ENCODE measurements at regions of chr9 and their contacts with region 1.

Region 1: DNA sequence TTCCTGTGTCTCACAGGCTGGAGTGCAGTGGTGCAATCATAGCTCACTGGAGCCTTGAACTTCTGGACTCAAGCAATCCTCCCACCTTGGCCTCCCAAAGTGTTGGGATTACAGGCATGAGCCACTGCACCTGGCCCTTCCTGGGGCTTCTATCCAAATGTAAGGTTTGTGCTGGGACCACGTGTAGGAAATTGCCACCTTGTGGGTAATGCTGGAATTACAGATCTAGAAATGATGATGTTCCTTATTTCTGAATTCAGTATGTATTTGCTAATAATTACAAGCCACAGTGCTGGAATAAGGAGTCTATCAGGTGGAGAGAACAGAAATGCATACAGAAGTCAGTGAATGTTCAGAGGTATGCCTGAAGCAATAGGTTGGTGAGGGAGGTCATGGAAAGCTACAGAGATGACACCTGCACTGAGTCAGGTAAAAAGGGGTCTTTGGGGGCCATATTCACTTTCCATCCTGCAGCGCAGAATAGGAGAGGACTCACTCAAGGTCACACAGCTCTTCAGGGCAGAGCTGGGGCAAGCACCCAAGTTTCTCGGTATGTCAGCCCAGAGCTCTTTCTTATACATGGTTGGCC is 8.8 kb upstream of the IGFBPL1 start:
- DNase-seq: no peak
- H3K4me3 Mint-ChIP-seq: no peak overlapping the region
- H3K27ac Mint-ChIP-seq: no peak overlapping the region
- H3K4me1 Mint-ChIP-seq: peaks cover 13% of the 10 kb centered on the region
- H3K27me3 Mint-ChIP-seq: no peaks in the 10 kb centered on the region

Region 2: GRCh38 chr9:37913480-37914153 is 519.4 kb before region 1 on chr9:
- CTCF ChIA-PET with region 1: interaction called, 4 read pairs
- intact Hi-C with region 1: loop called (anchors 1 kb)
- DNase-seq: peak; percentile 89
- H3K4me3 Mint-ChIP-seq: no peak overlapping the region
- H3K27ac Mint-ChIP-seq: no peak overlapping the region
- H3K4me1 Mint-ChIP-seq: peaks cover 2% of the 10 kb centered on the region
- H3K27me3 Mint-ChIP-seq: no peaks in the 10 kb centered on the region

Region 3: DNA sequence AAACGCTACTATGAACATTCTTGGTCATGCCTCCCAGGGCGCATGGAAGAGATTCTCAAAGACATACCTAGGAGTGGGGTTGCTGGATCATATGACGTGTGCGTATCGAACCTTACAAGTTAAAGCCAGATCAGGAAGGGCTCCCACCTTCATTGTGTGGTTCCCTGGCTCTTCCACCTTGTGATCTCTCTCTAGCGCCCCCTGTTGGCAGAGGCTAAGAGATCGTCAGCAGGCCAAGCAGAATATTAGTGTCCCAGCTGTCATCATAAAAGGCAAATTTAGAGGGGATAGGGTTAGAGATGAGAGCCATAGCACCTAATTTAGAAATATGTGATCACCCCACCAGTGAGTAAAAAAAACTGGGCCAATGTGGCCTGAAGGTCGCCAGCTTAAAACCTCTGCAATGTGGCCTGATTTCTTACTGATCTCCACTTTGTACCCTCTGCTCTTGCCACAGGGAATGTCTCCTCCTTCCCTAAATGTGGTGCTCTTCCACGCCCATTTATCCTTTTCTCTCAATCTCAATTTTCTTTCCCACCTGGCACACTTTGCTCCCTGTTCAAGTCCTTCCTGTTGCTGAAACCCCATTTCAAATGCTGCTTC is 272.3 kb before region 1 on chr9:
- CTCF ChIA-PET with region 1: no interaction called
- intact Hi-C with region 1: loop called (anchors 10 kb)
- DNase-seq: peak; percentile 79
- H3K4me3 Mint-ChIP-seq: no peak overlapping the region
- H3K27ac Mint-ChIP-seq: no peak overlapping the region
- H3K4me1 Mint-ChIP-seq: no peaks in the 10 kb centered on the region
- H3K27me3 Mint-ChIP-seq: no peaks in the 10 kb centered on the region

Region 4: DNA sequence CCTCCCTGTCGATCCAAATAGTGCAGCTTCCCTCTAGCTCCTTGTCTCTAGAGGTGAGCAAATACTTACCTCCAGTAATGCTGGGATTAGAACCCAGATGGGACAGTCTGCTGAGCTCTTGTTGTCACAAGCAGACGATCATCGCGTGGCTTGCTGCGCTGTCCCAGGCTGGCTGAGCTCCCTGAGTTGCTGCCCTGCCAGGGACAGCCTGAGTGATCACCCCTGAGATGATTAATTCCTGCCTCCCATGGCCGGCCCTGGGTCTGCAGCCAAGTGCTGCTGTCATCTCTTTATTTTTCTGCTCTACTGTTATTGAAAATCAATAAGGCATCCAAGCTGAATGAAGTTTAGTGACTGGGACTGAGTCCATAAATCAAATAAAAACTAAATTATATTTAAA is 134.5 kb before region 1 on chr9:
- CTCF ChIA-PET with region 1: no interaction called
- intact Hi-C with region 1: no loop called
- DNase-seq: no peak
- H3K4me3 Mint-ChIP-seq: no peak overlapping the region
- H3K27ac Mint-ChIP-seq: no peak overlapping the region
- H3K4me1 Mint-ChIP-seq: no peaks in the 10 kb centered on the region
- H3K27me3 Mint-ChIP-seq: no peaks in the 10 kb centered on the region

Region 5: GRCh38 chr9:38371495-38371894 is 61.5 kb before region 1 on chr9:
- CTCF ChIA-PET with region 1: no interaction called
- intact Hi-C with region 1: loop called (anchors 1 kb)
- DNase-seq: peak; percentile 50
- H3K4me3 Mint-ChIP-seq: no peak overlapping the region
- H3K27ac Mint-ChIP-seq: no peak overlapping the region
- H3K4me1 Mint-ChIP-seq: no peaks in the 10 kb centered on the region
- H3K27me3 Mint-ChIP-seq: no peaks in the 10 kb centered on the region

Region 6: DNA sequence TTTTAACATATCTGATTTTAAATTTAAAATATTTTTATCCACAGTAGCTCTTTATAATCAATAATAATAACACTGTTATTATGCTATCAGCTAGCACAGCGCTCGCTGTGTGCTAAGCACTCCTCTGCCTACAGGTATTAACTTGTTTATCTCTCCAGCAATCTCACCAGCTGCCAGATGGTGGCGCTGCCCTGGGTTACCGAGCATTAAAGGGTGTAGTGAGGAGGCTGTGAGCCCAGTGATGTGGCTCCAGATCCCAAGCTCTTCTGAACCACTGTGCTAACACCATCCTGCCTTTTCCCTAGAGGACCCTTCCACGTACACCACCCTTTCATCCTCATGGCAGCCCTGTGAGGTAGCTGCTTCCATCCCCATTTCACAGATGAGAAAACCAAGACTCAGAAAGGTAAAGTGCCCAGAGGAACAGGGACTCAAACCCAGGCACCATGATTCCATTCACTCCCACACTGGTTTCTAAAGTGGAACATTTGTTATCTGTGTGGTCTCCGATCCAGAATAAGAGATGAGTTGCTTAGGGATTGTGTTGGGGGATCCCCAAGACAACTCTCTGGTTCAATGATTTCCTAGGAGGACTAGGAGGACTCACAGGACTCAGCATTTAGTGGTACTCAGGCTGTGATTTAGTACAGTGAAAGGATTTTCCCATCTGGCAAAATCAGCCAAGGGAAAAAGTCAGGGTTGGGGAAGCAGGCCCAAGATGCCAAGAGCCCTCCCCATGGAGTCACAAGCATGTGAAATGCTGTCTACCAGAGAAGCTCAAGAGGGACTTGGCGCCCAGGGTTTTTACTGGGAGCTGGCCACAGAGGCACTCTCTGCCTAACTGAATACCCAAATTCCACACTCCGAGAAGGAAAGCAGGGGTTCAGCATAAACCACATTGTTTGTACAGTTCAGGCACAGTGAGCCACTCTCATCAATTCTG is 15.7 kb before region 1 on chr9:
- CTCF ChIA-PET with region 1: interaction called, 39 read pairs
- intact Hi-C with region 1: no loop called
- DNase-seq: peak; percentile 73
- H3K4me3 Mint-ChIP-seq: no peak overlapping the region
- H3K27ac Mint-ChIP-seq: no peak overlapping the region
- H3K4me1 Mint-ChIP-seq: no peaks in the 10 kb centered on the region
- H3K27me3 Mint-ChIP-seq: peaks cover 1% of the 10 kb centered on the region

Region 7: DNA sequence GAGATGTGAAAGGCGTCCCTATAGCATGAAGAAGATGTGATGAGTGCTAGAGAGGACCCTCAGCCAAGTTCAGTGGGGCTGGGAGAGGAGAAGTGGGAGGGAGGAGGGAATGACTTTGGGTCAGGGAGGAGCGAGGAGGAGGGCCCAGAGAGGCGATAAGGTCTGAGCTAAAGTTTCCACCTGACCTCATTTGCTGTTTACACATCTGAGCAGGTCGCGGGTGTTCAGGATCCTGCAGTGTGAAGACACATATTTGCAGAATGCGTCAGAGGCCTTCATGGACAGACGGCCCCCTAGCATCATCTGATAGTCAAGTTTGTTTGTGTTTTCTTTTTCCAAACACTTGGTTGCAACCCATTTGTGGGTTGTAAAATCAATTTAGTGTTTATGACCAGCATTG is 10.2 kb after region 1 on chr9:
- CTCF ChIA-PET with region 1: interaction called, 10 read pairs
- intact Hi-C with region 1: no loop called
- DNase-seq: no peak
- H3K4me3 Mint-ChIP-seq: no peak overlapping the region
- H3K27ac Mint-ChIP-seq: no peak overlapping the region
- H3K4me1 Mint-ChIP-seq: peaks cover 5% of the 10 kb centered on the region
- H3K27me3 Mint-ChIP-seq: peaks cover 5% of the 10 kb centered on the region

Region 8: GRCh38 chr9:38451162-38451561 is 18.1 kb after region 1 on chr9:
- CTCF ChIA-PET with region 1: interaction called, 11 read pairs
- intact Hi-C with region 1: no loop called
- DNase-seq: no peak
- H3K4me3 Mint-ChIP-seq: no peak overlapping the region
- H3K27ac Mint-ChIP-seq: no peak overlapping the region
- H3K4me1 Mint-ChIP-seq: no peaks in the 10 kb centered on the region
- H3K27me3 Mint-ChIP-seq: peaks cover 3% of the 10 kb centered on the region

Region 9: DNA sequence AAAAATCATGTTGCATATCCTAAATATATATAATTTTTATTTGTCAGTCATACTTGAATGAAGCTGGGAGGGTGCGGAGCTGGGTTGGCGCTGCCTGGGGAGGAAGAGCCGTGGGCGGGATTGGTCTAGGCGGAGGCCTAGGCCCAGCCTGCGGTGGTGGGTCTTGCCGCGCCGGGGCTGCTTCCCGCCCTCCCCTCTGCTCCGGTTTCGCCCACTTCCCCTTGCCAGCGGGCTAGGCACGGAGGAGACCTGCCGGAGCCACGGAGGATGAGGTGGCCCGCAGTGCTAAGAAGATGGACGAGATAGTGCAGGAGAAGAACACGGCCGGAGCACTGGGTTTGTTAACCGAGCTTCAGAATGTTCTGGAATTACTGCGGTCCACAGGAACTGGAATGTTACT is 45.2 kb after region 1 on chr9:
- CTCF ChIA-PET with region 1: no interaction called
- intact Hi-C with region 1: no loop called
- DNase-seq: no peak
- H3K4me3 Mint-ChIP-seq: no peak overlapping the region
- H3K27ac Mint-ChIP-seq: no peak overlapping the region
- H3K4me1 Mint-ChIP-seq: no peaks in the 10 kb centered on the region
- H3K27me3 Mint-ChIP-seq: no peaks in the 10 kb centered on the region

Measured in activated naive CD4-positive, alpha-beta T cell treated with anti-CD3 and anti-CD28 coated beads for 36 hours (primary cell).